B cell (primary cell): ENCODE measurements at regions of chr10 and their contacts with region 1.

Region 1: GRCh38 chr10:88810196-88810961 is 7.8 kb downstream of the LIPM start:
- DNase-seq: peak; percentile 53
- ATAC-seq: peak; percentile 54
- H3K4me3 ChIP-seq: no peak overlapping the region
- H3K4me3 Mint-ChIP-seq: no peak overlapping the region
- H3K27ac ChIP-seq: no peak overlapping the region
- H3K27ac Mint-ChIP-seq: no peak overlapping the region
- H3K4me1 ChIP-seq: no peaks in the 10 kb centered on the region
- H3K4me1 Mint-ChIP-seq: no peaks in the 10 kb centered on the region
- H3K27me3 ChIP-seq: no peaks in the 10 kb centered on the region
- H3K27me3 Mint-ChIP-seq: peaks cover 13% of the 10 kb centered on the region
- CTCF ChIP-seq: peak; percentile 73

Region 2: GRCh38 chr10:88687853-88688467 is 122.4 kb before region 1 on chr10:
- CTCF ChIA-PET with region 1: interaction called, 3 read pairs
- POLR2A ChIA-PET with region 1: no interaction called
- intact Hi-C with region 1: loop called (anchors 1 kb)
- DNase-seq: peak; percentile 19
- ATAC-seq: peak; percentile 36
- H3K4me3 ChIP-seq: no peak overlapping the region
- H3K4me3 Mint-ChIP-seq: no peak overlapping the region
- H3K27ac ChIP-seq: no peak overlapping the region
- H3K27ac Mint-ChIP-seq: no peak overlapping the region
- H3K4me1 ChIP-seq: no peaks in the 10 kb centered on the region
- H3K4me1 Mint-ChIP-seq: no peaks in the 10 kb centered on the region
- H3K27me3 ChIP-seq: peaks cover 0 to 1% (median 0%) of the 10 kb centered on the region in 4 experiments
- H3K27me3 Mint-ChIP-seq: peaks cover 10% of the 10 kb centered on the region
- CTCF ChIP-seq: peak; percentile 95

Region 3: GRCh38 chr10:88851706-88852105 is 41.3 kb after region 1 on chr10 and contains the start of gene ANKRD22:
- CTCF ChIA-PET with region 1: no interaction called
- POLR2A ChIA-PET with region 1: no interaction called
- intact Hi-C with region 1: no loop called
- DNase-seq: no peak
- ATAC-seq: no peak
- H3K4me3 ChIP-seq: peak within 1 kb of the TSS in 1 of 5 experiments; percentile 47
- H3K4me3 Mint-ChIP-seq: no peak within 1 kb of the TSS
- H3K27ac ChIP-seq: no peak within 1 kb of the TSS
- H3K27ac Mint-ChIP-seq: no peak within 1 kb of the TSS
- H3K4me1 ChIP-seq: no peaks in the 10 kb centered on the region
- H3K4me1 Mint-ChIP-seq: no peaks in the 10 kb centered on the region
- H3K27me3 ChIP-seq: no peaks in the 10 kb centered on the region
- H3K27me3 Mint-ChIP-seq: no peaks in the 10 kb centered on the region
- CTCF ChIP-seq: no peak
- total RNA-seq, gene ANKRD22: not detected in 2 replicates